ENCODE measurements at regions of chr18 and their contacts with region 1.

Region 1: DNA sequence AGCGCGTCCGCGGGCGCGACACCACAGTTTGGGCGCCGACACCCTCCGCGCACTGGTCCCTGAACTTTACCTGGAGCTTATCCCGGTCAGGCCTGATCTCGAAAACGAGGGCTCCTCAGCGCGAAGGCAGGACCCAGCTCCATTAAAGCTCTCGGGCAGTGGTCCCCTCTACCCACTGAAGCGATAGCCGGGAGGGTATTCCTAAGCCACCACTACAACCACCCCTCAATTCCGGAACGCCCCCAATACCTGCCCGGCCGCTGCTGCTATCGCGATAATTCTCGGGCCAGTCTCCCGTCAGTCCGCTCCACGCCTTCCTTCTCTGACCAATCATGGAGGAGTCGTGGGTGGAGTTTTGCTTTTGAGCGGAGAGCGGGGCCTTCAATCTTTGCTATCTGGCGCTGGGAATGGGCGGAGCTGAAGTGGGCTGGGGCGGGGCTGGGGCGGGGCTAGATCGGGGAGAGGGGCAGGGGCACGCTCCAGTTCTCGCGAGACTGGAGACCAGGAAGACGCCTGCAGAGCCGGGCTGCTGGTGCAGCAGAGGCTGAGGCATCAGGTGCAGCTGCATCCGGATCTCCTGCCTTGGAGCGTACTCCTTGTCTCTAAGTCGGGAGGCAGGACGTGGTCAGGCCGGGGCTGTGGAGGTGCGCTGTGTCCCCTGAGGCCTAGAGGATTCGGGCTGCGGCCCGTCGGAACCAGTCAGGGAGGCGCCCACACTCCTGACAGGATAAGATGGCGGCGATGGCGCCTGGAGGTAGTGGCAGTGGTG is at the starts of genes PIGN and RELCH:
- DNase-seq: peak; percentile 93
- H3K4me3 Mint-ChIP-seq: peak within 1 kb of the TSS; percentile 99
- H3K27ac Mint-ChIP-seq: peak within 1 kb of the TSS; percentile 96
- H3K4me1 Mint-ChIP-seq: peaks cover 68% of the 10 kb centered on the region
- H3K27me3 Mint-ChIP-seq: no peaks in the 10 kb centered on the region
- total RNA-seq, gene PIGN: 28.5 and 36.1 TPM in 2 replicates
- total RNA-seq, gene RELCH: 32.6 and 34.5 TPM in 2 replicates

Region 2: DNA sequence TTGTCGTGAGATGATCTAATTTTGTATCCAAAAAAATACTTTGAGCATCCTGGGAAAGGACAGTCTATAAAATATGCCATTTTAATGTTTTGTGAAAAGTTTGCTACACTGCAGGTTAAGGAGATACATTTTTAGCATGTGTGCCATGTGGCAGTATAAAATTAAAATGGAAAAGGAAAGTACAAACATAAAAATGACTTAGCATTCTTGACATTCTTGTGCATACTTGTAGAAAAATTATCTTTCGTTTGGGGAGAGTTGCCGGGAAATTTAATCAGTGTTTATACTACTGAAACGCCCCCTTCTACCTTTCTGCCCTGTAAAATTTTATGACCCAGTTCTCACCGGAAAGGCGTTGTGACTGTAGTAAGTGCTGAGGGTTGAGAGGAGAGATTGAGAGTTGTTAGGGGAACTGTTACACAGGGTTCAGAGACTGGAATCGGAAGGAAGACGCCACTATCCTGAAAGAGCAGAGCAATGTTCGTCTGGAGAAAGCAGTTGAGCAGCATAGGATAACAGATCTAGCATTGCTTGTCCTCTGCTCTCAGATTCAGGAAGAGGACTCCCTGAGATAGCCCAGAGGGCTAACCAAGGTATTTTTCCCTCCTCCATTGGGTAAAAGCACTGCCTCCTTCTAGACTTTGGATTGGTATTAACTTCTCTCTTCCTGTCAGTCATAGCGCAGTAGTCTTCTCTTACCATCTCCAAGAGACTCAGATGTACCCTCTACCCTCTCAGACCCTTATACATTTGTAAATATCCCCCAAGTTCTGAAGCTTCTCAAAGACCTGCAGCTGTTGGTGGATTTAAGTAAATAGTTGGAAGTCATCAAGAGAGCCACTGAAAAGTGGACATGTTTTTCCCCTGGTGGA is 851.0 kb before region 1 on chr18:
- intact Hi-C with region 1: no loop called
- DNase-seq: no peak
- H3K4me3 Mint-ChIP-seq: no peak overlapping the region
- H3K27ac Mint-ChIP-seq: no peak overlapping the region
- H3K4me1 Mint-ChIP-seq: no peaks in the 10 kb centered on the region
- H3K27me3 Mint-ChIP-seq: peaks cover 29% of the 10 kb centered on the region

Region 3: GRCh38 chr18:61926532-61926931 is 260.4 kb before region 1 on chr18:
- intact Hi-C with region 1: loop called (anchors 1 kb)
- DNase-seq: peak; percentile 26
- H3K4me3 Mint-ChIP-seq: peak overlapping the region; percentile 63
- H3K27ac Mint-ChIP-seq: peak overlapping the region; percentile 74
- H3K4me1 Mint-ChIP-seq: peaks cover 40% of the 10 kb centered on the region
- H3K27me3 Mint-ChIP-seq: peaks cover 12% of the 10 kb centered on the region

Region 4: DNA sequence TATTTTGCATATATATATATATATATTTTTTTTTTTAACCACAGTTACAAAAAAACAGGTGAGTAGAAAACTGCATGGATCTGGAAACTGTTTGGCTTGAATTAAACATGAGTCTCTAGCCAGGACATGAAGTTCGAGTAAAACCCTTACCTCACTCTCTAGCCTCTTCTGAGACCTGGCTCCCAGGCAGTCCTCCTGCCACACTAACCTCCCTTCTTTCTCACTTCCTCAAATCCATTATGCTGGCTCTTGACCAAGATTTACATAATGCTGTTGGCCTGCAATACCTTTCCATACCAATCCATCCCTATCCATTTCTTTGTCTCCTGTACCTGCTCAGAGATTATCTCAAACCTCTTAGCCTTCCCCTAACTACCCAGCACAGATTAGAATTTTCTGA is 34.1 kb before region 1 on chr18:
- intact Hi-C with region 1: no loop called
- DNase-seq: no peak
- H3K4me3 Mint-ChIP-seq: no peak overlapping the region
- H3K27ac Mint-ChIP-seq: no peak overlapping the region
- H3K4me1 Mint-ChIP-seq: no peaks in the 10 kb centered on the region
- H3K27me3 Mint-ChIP-seq: no peaks in the 10 kb centered on the region

Region 5: GRCh38 chr18:62196980-62197379 is 10.0 kb after region 1 on chr18:
- intact Hi-C with region 1: loop called (anchors 1 kb)
- DNase-seq: no peak
- H3K4me3 Mint-ChIP-seq: no peak overlapping the region
- H3K27ac Mint-ChIP-seq: no peak overlapping the region
- H3K4me1 Mint-ChIP-seq: peaks cover 43% of the 10 kb centered on the region
- H3K27me3 Mint-ChIP-seq: no peaks in the 10 kb centered on the region

Region 6: DNA sequence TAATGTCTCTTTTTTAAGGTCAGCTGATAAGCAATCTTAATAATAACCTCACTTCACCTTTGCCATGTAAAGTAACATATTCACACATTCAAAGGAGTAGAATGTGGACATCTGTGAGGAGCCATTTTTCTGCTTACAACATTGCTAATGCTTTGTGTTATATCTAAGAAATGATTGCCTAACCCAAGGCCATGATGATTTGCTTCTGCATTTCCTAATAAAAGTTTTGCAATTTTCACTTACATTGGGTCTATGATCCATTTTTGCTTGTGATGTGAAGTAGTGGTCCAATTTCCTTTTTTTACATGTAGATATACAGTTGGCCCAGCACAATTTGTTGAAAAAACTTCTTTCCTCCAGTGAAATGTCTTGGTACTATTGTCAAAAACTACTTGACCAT is 22.1 kb after region 1 on chr18:
- intact Hi-C with region 1: no loop called
- DNase-seq: no peak
- H3K4me3 Mint-ChIP-seq: no peak overlapping the region
- H3K27ac Mint-ChIP-seq: no peak overlapping the region
- H3K4me1 Mint-ChIP-seq: peaks cover 14% of the 10 kb centered on the region
- H3K27me3 Mint-ChIP-seq: no peaks in the 10 kb centered on the region

Region 7: DNA sequence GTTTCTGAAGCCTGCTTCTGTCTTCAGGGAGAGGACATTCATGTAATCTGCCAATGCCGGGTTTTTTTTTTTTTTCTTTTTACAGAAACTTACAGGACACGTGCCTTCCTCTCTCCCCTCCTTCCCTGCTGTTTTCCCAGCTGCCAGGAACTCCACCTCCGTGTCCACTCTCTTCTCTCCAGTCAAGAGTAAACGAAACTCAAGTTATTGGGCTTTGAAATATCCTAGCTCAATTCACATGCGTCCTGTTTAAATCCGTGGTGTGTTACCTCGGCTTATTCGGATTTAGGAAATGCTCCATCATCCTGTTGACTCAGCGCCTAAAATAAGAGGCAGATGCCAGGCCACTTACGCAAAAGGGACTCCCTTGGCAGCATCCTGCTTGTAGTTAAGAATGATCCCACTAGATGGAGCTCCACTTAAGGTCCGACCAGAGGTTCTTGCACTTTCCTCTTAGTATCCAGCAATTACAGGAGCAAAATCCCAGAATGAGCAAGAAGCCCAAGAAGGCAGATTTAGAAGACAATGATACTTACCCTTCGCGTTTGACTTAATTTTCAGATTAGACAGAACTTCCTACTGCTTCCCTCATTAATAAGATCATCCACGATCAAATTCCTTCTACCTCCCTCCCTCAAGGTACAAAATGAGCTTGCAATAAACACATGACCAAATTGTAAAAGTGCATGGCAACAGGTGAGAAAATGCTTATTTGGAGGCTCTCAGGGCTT is 238.7 kb after region 1 on chr18:
- intact Hi-C with region 1: loop called (anchors 1 kb)
- DNase-seq: peak; percentile 56
- H3K4me3 Mint-ChIP-seq: peak overlapping the region; percentile 19
- H3K27ac Mint-ChIP-seq: peak overlapping the region; percentile 69
- H3K4me1 Mint-ChIP-seq: peaks cover 44% of the 10 kb centered on the region
- H3K27me3 Mint-ChIP-seq: no peaks in the 10 kb centered on the region

Region 8: DNA sequence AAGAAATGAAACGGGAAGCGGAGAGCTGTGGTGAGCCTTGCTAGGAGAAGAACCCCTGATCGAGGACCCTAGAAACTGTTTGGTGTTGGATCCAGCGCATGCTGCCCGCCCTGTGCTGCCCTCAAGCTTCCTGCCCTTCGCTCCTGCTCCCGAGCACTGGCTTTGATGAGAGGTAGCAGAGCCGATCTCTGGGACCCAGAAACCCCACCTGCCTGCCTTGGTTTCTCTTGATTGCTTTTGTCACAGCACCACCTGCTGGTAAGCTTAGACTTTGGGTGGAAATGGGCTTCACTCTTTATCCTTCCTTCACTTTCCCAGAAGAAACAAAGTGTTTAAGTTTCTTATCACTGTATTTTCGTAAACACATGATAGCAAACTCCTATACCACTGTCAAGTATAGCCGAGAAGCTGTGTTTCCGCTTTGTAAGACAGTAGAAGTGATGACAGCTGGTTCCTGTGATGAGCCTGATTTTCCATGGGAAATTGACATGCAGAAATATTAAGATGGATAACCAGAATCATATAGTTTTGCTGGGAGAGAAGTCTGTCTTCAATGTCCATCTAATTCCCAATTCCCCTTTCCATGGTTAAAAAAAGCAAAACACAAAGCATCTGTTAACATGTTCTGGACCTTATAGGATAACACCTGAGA is 795.8 kb after region 1 on chr18:
- intact Hi-C with region 1: loop called (anchors 5 kb)
- DNase-seq: peak; percentile 28
- H3K4me3 Mint-ChIP-seq: no peak overlapping the region
- H3K27ac Mint-ChIP-seq: no peak overlapping the region
- H3K4me1 Mint-ChIP-seq: no peaks in the 10 kb centered on the region
- H3K27me3 Mint-ChIP-seq: no peaks in the 10 kb centered on the region

Region 9: DNA sequence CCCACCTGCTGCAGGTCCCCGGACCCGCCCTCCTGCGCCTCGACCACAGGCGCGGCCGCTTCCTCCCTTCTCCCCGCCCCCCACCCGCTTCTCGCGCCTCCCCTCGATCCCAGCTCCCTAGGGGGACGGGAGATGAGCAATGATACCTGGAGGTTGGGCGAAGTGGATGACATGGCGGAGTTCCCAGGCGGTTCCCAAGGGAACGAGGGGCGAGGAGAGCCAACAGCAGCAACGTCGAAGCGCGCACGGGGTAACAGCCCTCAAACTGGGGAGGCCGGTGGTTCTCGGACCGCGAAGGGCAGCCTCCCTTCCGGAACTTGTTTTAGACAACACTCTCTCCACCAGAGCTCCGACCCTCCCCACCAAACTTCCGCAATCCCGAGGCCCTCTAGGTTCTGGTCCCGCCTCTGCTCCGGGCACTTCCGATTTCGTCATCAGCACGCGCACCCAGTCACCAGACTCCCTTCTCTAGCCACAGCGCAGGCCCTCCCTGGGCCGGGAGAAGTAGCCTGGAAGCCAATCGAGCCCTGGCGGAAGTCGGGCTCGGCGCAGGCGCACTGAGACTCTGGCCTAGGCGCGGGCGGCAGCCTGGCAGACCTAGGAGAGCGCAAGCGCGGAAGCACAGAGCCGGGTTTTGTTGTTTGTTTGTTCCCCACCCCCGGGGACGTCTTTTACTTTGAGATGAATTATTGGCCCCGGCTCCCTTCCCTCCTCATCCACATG is 1235.3 kb after region 1 on chr18 and contains the start of gene VPS4B:
- intact Hi-C with region 1: loop called (anchors 1 kb)
- DNase-seq: peak; percentile 100
- H3K4me3 Mint-ChIP-seq: peak within 1 kb of the TSS; percentile 91
- H3K27ac Mint-ChIP-seq: peak within 1 kb of the TSS; percentile 92
- H3K4me1 Mint-ChIP-seq: peaks cover 18% of the 10 kb centered on the region
- H3K27me3 Mint-ChIP-seq: no peaks in the 10 kb centered on the region
- total RNA-seq, gene VPS4B: 58.6 and 60.7 TPM in 2 replicates